A673 (cell line): ENCODE measurements at regions of chr13 and their contacts with region 1.

Region 1: DNA sequence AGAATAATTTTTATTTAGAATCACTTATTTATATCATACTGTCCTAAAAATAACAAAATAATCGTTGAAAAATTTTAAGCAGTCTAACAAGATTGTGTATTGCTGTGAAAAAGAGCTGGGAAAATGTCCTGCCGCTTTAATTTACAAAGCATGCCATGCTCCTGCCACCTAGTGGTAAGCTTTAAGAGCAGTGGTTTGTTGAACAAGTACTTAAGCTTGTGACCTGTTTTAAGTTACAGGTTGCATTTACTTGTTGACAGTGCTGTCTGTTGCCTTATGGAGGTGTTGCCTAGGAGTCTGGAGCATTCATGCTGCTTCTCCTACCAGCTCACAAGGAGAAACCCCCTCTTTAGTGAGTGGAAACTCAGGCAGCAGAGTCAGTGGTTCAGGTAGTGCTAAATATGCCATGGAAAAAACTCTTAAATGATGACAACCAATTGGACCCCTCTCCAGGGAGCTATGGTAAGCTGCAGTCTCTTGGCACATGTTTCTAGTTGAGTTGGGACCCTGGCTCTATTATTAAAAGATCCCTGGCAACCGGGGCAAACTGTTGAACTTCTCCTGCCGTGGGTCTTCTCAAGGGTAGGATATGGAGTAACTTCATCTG is 68.4 kb downstream of the SPATA13 start:
- DNase-seq: peak; percentile 76
- H3K4me3 ChIP-seq: no peak overlapping the region
- H3K27ac ChIP-seq: no peak overlapping the region
- H3K4me1 ChIP-seq: peaks cover 23% of the 10 kb centered on the region
- H3K27me3 ChIP-seq: no peaks in the 10 kb centered on the region
- CTCF ChIP-seq: peak; percentile 94

Region 2: GRCh38 chr13:24020375-24020830 is 208.6 kb before region 1 on chr13:
- CTCF ChIA-PET with region 1: interaction called, 12 read pairs
- POLR2A ChIA-PET with region 1: no interaction called
- intact Hi-C with region 1: no loop called
- DNase-seq: peak; percentile 70
- H3K4me3 ChIP-seq: no peak overlapping the region
- H3K27ac ChIP-seq: no peak overlapping the region
- H3K4me1 ChIP-seq: no peaks in the 10 kb centered on the region
- H3K27me3 ChIP-seq: no peaks in the 10 kb centered on the region
- CTCF ChIP-seq: peak; percentile 85

Region 3: DNA sequence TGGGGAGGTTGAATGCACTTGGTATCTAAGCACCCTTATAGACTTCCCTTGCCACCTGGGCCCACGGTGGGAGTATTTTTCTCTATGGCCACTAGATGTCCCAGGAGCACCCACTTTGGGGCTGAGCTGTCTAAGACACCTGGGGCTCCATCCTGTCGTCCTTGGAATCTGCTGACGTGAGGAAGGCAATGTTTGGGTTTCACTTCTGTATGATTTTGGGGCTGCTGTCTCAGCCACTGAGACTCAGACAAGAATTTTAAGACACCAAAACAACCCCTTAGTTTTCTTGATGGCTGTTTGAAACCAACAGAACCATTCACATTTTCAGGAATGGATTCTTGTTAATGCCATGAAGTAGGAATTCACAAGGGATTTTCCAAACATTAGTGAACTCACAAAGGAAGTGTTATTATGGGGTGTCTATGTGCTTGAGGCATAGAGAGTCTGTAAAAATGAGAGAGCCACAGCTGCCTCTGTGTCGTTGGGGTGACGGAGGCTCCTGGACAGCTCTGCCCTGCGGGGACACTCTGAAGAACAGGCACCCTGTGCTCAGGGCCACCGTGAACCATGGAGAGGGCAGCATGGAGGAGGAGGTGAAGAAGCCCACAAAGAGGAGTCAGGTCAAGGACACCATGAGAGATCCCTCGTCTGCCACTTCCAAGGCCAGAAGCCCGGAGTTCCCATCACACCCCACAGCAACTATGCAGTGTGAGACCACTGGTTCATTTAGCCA is 175.3 kb before region 1 on chr13:
- CTCF ChIA-PET with region 1: interaction called, 14 read pairs
- POLR2A ChIA-PET with region 1: no interaction called
- intact Hi-C with region 1: no loop called
- DNase-seq: peak; percentile 80
- H3K4me3 ChIP-seq: no peak overlapping the region
- H3K27ac ChIP-seq: no peak overlapping the region
- H3K4me1 ChIP-seq: peaks cover 9% of the 10 kb centered on the region
- H3K27me3 ChIP-seq: no peaks in the 10 kb centered on the region
- CTCF ChIP-seq: peak; percentile 80

Region 4: DNA sequence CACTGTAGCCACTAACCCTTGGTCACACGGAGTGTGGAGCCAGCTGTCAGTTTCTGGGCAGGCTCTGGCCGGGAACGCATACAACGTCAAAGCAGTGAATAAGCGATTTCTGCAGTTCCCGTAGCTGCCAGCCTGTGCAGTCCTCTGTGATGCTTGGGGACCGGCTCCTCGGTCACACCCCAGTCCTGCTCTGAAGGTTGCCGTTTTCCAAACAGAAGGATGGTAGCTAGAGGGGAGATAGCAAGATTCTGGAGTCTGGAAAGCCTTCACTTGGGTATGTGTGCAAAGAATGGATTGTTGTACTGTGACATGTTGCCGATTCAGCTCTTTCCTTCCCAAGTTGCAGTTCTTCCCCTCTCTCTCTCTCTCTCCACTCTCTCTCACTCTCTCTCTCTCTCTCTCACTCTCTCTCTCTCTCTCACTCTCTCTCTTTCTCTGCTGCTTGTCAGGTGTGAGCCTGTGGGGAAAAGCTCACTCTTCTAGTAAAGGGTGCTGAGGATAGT is 41.7 kb after region 1 on chr13:
- CTCF ChIA-PET with region 1: no interaction called
- POLR2A ChIA-PET with region 1: no interaction called
- intact Hi-C with region 1: loop called (anchors 2 kb)
- DNase-seq: peak; percentile 74
- H3K4me3 ChIP-seq: peak overlapping the region; percentile 53
- H3K27ac ChIP-seq: peak overlapping the region; percentile 97
- H3K4me1 ChIP-seq: peaks cover 32% of the 10 kb centered on the region
- H3K27me3 ChIP-seq: no peaks in the 10 kb centered on the region
- CTCF ChIP-seq: peak; percentile 24; the same call in 1 of the 2 replicates

Region 5: GRCh38 chr13:25132751-25133390 is 903.9 kb after region 1 on chr13:
- CTCF ChIA-PET with region 1: no interaction called
- POLR2A ChIA-PET with region 1: no interaction called
- intact Hi-C with region 1: no loop called
- DNase-seq: peak; percentile 69
- H3K4me3 ChIP-seq: no peak overlapping the region
- H3K27ac ChIP-seq: peak overlapping the region; percentile 77
- H3K4me1 ChIP-seq: peaks cover 48% of the 10 kb centered on the region
- H3K27me3 ChIP-seq: no peaks in the 10 kb centered on the region
- CTCF ChIP-seq: no peak